ENCODE measurements at regions of chr22 and their contacts with region 1.

Region 1: GRCh38 chr22:29245637-29246385 is 22.0 kb downstream of the RHBDD3 start:
- DNase-seq: no peak
- H3K4me3 ChIP-seq: no peak overlapping the region
- H3K27me3 ChIP-seq: peaks cover 3% of the 10 kb centered on the region
- CTCF ChIP-seq: peak; percentile 97

Region 2: GRCh38 chr22:28600546-28601143 is 645.2 kb before region 1 on chr22:
- CTCF ChIA-PET with region 1: interaction called, 12 read pairs
- POLR2A ChIA-PET with region 1: no interaction called
- DNase-seq: no peak
- H3K4me3 ChIP-seq: no peak overlapping the region
- H3K27me3 ChIP-seq: no peaks in the 10 kb centered on the region
- CTCF ChIP-seq: peak; percentile 28; the same call in 1 of the 2 replicates

Region 3: DNA sequence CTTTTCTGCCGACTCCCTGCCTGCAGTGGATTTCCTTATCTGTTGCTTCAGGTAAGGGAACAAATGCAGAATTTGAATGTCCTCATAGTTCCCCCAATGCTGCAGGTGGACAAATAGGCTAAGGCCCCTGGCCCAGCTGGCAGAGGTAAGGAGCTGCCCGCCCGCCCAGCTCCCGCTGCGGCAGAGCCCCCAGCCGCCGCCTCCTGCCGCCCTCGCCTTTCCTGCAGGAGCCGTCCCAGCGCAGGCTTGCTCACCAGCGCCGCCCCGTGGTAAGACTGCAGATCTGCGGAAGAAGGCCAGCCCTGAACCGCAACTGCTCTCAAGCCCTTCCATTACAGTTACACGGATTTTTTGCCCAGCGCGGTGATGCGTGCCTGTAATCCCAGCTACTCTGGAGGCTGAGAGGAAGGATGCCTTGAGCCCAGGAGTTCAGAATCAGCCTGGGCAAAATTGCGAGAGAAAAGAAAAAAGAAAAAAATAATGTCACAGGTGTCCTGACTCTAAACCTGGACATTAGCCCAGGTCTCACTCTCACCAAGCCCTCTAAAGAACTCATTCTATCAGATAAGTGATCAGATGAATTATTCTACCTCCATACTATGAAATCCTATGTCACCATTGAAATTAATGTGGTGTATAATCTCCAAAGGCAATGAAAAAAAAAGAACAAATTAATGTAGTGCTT is 91.3 kb before region 1 on chr22:
- CTCF ChIA-PET with region 1: interaction called, 11 read pairs
- POLR2A ChIA-PET with region 1: no interaction called
- DNase-seq: no peak
- H3K4me3 ChIP-seq: no peak overlapping the region
- H3K27me3 ChIP-seq: peaks cover 5% of the 10 kb centered on the region; the same call in 1 of the 2 replicates
- CTCF ChIP-seq: peak; percentile 96

Region 4: GRCh38 chr22:29208879-29209623 is 36.8 kb before region 1 on chr22:
- CTCF ChIA-PET with region 1: interaction called, 14 read pairs
- POLR2A ChIA-PET with region 1: no interaction called
- DNase-seq: no peak
- H3K4me3 ChIP-seq: no peak overlapping the region
- H3K27me3 ChIP-seq: peaks cover 24% of the 10 kb centered on the region
- CTCF ChIP-seq: no peak

Region 5: DNA sequence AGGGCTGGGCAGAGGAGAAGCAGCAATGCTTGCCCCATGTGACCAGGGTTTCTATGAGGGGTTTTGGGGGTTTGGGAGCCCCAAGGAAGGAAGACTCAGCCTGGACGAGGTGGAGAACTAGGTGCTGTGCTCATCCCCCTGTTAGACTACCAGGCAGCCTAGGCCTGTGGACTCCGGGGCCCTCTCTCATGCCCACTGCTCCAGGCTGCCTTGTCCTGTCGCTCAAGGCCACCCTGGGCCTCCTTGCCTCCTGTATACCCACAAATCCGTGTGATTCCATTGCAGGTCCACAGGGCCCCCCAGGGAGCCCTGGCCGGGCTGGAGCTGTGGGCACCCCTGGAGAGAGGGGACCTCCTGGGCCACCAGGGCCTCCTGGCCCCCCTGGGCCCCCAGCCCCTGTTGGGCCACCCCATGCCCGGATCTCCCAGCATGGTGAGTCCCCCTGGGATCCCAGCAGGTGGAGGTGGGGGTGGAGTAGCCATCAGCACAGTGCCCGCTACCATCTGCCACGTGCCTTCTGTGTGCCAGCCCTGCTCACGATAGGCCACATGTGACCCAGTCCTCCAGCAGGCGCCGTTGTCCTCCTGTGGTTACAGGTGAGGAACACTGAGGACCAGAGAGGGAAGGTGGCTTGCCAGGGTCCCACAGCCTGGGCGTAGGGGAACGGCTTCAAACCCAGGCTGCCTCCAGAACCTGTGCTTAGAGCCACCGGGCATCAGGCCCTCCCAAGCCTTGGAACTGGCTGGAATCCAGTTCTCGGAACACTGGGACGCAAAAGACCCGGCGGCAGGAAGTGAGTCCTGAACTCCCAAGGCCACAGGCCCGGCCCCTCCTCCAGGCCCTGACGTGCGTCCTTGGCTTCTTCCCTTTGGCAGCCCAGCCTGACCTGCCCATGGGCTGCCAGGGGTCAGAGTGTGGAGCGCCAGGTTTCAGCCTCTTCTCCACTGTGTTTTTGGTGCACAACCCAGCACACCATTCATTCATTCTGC is 13.5 kb before region 1 on chr22:
- CTCF ChIA-PET with region 1: interaction called, 33 read pairs
- POLR2A ChIA-PET with region 1: no interaction called
- DNase-seq: no peak
- H3K4me3 ChIP-seq: no peak overlapping the region
- H3K27me3 ChIP-seq: no peaks in the 10 kb centered on the region
- CTCF ChIP-seq: no peak

Measured in BJ (cell line).